ENCODE measurements at regions of chr7 and their contacts with region 1.

Region 1: DNA sequence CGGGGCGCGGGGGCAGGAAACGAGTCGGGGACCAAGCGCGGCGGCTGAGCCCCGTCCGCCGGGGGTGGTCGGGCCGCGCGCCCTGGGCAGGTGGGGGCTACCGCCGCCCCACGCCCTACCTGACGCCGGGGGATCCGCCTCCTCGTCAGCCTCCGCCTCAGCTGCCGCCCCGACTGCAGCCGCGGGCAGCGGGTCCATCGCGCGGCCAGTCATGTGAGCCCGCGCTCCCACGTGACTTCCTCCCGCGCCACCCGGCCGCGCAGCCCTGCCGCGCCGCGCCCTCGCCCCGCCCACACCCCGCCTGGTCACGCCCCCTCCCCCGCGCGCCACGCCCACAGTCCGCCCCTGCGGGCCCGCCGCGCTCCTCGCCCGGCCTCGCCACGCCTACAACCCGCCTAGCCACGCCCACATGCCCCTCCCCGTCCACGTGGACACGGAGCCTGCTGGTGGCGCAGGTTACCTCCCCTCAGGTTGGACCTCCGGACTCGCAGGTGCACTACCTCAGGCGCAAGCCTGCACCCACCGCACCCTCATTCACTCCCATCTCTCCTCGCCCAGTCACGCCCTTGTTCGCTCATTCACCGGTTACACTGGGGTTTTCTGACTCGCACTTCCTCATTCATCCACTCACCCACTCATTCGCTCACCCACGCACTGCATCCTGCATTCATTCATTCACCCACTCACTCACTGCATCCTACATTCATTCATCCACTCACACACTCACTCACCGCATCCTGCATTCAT is at the start of gene SNX8:
- DNase-seq: peak; percentile 87
- ATAC-seq: peak; percentile 78
- H3K4me3 ChIP-seq: peak within 1 kb of the TSS; percentile 92
- H3K27ac ChIP-seq: 0 out of 2 replicates have a peak within 1 kb of the TSS, but pooled peaks have one; percentile 11
- H3K4me1 ChIP-seq: peaks cover 24% of the 10 kb centered on the region
- H3K27me3 ChIP-seq: no peaks in the 10 kb centered on the region
- CTCF ChIP-seq: no peak
- total RNA-seq, gene SNX8: 12.3 and 20.5 TPM in 2 replicates

Region 2: DNA sequence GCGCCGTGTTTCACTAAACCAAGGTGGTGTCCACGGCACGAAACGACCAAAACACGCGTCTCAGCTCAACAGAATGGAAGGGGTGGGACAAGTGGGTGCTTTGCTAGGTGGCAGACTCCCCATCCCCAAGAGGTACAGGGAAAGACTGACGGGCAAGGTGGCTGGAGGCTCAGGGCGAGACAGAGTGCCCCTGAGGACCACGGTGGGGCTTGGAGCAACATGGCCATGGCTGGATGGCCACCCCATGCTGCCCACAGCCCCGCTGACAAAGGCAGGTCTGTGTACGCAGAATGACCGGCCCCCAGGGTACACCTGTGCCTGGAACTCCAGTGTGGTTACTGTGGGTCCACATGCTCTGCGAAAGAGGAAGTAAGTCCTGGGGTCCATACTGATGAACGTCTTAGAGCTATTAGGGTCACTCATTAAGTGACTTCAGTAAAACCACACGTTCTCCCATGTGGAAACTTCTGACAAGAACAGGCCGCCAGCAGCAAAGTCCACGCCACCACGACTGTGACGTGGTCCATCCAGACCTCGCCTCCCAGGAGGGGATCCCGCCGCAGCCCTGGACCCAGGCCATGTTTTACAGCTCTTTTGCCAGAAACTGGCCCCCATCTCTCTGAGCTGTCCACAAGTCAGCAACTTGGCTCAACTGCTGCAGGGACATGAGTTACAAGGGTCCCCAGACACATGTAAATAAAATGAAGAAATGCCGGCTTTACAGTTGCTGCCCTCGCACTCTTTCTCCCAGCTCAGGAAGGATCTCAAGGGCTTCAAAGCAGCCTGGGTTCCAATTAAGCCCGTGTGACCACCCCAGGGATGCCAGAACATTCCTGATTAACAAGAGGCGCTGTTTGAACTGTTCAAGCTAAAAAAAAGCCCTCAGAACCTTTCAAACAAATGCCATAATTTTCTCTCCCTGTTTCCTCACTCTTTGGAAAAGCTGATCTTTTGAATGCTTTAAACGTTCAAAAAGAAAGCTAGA is 148.5 kb before region 1 on chr7:
- CTCF ChIA-PET with region 1: no interaction called
- POLR2A ChIA-PET with region 1: no interaction called
- intact Hi-C with region 1: no loop called
- DNase-seq: no peak
- ATAC-seq: no peak
- H3K4me3 ChIP-seq: no peak overlapping the region
- H3K27ac ChIP-seq: no peak overlapping the region
- H3K4me1 ChIP-seq: no peaks in the 10 kb centered on the region
- H3K27me3 ChIP-seq: no peaks in the 10 kb centered on the region
- CTCF ChIP-seq: no peak

Region 3: DNA sequence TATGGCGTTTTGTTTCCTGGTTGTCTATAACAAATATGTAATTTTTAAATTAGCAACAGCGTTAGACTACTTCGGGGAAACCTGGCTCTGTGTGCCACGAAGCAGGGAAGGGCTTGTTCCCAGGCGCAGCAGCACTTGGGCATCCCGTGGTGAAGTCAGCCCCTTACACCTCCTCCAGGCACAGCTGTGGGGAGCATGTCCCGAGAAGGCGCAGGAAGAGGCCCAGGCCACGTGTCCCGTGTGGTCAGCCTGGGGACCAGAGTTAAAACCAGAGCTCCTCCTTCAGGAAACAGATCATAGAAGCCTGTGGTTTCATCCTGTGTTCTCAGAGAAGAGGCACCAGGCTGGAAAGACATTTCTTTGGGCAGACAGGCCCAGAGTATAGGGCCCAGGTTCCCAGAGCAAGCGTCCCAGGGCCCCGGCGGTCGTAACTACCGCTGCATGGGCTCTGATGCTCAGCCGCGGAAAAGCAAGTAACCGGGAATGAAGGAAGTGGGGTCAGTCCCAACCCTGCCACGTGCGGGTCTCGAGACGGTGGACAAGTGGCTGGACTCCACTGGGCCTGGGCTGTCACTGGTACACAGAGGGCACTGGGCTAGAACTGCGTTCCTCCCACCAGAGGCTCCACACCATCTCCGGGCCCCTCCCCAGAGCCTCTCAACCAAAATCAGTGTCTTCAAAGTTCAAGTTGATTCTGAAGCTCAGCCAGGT is 65.2 kb before region 1 on chr7:
- CTCF ChIA-PET with region 1: no interaction called
- POLR2A ChIA-PET with region 1: interaction called, 4 read pairs
- intact Hi-C with region 1: loop called (anchors 2 kb)
- DNase-seq: peak; percentile 80
- ATAC-seq: peak; percentile 94
- H3K4me3 ChIP-seq: peak overlapping the region; percentile 3; the same call in 1 of the 2 replicates
- H3K27ac ChIP-seq: peak overlapping the region; percentile 81
- H3K4me1 ChIP-seq: peaks cover 18% of the 10 kb centered on the region
- H3K27me3 ChIP-seq: no peaks in the 10 kb centered on the region
- CTCF ChIP-seq: peak; percentile 40; the same call in 1 of the 2 replicates

Region 4: DNA sequence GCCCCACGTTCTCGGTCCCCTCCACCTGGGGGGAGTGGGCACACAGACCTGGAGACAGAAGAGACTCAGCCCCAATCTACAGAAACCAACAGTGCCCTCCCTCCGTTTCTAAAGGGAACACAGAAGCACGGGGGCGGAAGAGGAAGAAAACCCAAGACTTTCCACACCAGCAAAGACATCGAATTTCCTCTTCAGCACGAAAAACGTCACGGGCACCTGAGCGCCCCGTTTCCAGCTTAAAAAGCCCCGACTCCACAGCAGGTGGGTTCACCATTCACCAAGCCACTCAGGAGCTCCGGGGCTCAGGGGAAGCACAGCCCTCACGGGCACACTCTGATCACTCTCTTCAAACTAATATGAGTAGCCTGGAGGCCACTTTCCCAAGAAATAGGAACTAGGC is 52.8 kb before region 1 on chr7:
- CTCF ChIA-PET with region 1: interaction called, 3 read pairs
- POLR2A ChIA-PET with region 1: no interaction called
- intact Hi-C with region 1: loop called (anchors 5 kb)
- DNase-seq: no peak
- ATAC-seq: no peak
- H3K4me3 ChIP-seq: no peak overlapping the region
- H3K27ac ChIP-seq: no peak overlapping the region
- H3K4me1 ChIP-seq: peaks cover 18% of the 10 kb centered on the region
- H3K27me3 ChIP-seq: no peaks in the 10 kb centered on the region
- CTCF ChIP-seq: no peak